ENCODE measurements at regions of chr1 and their contacts with region 1.

Region 1: DNA sequence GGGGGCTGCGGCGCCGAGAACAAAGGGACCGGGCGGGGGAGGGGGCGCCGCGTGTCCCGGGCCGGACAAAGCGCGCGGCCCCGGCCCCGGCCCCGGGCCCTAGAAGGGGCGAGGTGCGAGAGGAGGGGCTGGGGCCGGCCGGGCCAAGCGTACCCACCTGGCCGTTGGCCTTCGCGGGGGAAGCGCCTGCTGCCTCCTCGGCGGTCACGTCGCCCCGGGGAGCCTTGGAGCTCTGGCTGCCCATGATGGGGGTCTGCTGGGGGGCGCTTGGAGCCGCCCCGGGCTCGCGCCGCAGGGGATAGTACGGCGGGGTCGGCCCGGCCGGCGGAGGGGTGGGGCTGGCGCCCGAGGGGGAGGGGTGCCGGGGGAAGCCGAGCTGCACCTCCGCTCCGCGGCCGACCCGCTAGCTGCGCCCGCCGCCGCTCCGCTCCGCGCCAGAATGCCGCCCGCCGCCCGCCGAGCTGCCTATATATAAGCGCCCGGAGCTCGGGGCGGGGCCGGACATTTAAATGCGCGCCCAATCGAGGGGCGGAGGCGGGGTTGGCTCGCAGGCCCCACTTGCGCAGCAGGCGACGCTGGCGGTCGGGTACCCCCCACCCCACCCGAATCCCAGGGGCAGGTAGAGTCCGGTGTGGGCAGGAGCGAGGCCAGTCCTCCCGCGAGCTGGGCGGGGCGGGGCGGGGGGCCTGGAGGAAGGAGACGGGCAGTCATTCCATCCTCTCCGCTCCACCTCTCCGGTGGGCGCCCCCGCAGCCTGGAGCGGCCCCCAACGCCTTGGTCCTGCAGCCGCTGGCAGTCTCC is at the start of gene MARCKSL1:
- DNase-seq: peak; percentile 91
- ATAC-seq: peak; percentile 62
- H3K4me3 Mint-ChIP-seq: peak within 1 kb of the TSS; percentile 85
- H3K27ac Mint-ChIP-seq: no peak within 1 kb of the TSS
- H3K4me1 Mint-ChIP-seq: peaks cover 24% of the 10 kb centered on the region
- H3K27me3 Mint-ChIP-seq: peaks cover 7% of the 10 kb centered on the region
- total RNA-seq, gene MARCKSL1: 21.7 to 22.0 TPM

Region 2: DNA sequence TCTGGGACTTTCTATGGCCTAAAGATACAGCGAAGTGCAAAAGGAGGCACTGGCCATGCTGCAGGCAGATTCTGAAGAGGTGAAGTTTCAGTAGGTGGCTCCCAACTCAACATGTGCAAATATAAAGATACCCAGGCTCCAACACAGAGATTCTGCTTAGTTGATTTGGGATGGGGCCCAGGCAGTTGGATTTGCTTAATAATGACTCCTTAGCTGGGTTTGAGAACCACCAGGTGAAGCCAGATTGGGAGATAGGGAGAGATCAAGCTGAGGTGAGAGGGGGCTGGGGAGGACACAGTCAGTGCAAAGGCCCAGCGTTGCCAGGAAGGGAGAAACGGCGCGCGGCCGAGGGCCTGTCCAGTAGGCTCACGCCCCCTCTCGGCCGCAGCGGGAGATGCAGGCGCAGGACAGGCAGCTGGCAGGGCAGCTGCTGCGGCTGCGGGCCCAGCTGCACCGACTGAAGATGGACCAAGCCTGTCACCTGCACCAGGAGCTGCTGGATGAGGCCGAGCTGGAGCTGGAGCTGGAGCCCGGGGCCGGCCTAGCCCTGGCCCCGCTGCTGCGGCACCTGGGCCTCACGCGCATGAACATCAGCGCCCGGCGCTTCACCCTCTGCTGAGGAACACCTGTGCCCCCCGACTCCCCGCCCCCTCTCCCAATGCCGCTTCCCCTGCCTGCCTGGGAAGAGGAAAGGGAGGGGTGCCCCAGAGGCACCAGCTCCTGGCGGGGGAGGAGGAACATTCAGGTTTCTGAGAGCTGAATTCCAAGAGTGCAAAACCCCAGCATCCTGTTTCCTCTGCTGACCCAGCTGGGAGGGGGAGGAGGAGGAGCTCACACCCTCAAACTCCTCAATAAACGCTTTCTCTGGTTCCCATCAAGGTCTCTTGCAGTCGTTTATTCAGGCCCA is 87.8 kb before region 1 on chr1:
- POLR2A ChIA-PET with region 1: interaction called, 17 read pairs
- DNase-seq: peak; percentile 85
- ATAC-seq: peak; percentile 10
- H3K4me3 Mint-ChIP-seq: peak overlapping the region; percentile 99
- H3K27ac Mint-ChIP-seq: peak overlapping the region; percentile 99
- H3K4me1 Mint-ChIP-seq: peaks cover 45% of the 10 kb centered on the region
- H3K27me3 Mint-ChIP-seq: no peaks in the 10 kb centered on the region

Region 3: DNA sequence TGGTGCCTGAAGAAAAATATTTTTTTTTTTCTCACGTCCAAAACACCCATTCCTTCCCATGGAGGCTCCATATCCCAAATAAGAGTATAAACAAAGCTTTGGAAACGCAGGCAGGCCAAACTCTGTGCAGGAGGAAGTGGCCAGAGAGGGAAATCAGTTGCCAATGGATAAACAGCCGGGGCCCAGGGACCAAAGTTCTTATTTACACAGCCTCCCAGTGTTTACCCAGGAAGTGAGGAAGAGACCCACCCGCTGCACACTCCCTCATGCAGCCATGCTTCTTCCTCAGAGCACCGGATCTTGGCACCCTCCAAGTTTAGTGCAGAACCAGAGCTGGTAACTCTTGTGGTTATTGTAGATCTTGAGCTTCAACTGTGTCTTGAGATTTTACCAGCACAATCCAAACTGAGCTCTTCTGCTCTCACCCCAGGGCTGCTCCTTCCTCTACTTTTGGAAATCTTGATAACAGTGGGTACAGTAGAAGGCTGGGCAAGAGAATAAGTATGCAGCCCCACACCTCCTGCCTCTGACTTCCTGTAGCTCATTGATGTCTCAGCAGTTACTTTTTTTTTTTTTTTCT is 14.2 kb before region 1 on chr1:
- POLR2A ChIA-PET with region 1: interaction called, 12 read pairs
- DNase-seq: no peak
- ATAC-seq: peak; percentile 86
- H3K4me3 Mint-ChIP-seq: peak overlapping the region; percentile 48
- H3K27ac Mint-ChIP-seq: peak overlapping the region; percentile 75
- H3K4me1 Mint-ChIP-seq: peaks cover 29% of the 10 kb centered on the region
- H3K27me3 Mint-ChIP-seq: no peaks in the 10 kb centered on the region

Region 4: DNA sequence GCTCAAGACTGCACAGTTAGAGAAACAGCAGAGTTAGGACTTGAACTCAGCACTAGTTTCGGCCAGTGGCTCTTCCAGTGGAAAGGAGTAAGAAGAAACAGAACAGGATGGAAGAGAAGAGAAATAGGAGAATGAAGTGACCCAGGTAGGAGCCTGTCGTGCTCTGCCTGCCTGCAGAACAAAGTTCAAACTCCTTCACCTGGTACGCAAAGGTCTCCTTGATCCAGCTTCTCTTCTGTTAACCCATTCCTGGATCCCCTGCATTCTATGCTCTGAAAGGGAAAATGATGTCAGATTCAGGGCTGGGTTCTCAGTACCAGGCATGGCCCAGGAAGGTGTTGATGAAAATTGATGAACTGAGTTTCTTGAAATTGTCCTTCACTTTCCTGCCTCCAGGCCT is 22.4 kb after region 1 on chr1:
- POLR2A ChIA-PET with region 1: interaction called, 33 read pairs
- DNase-seq: no peak
- ATAC-seq: no peak
- H3K4me3 Mint-ChIP-seq: no peak overlapping the region
- H3K27ac Mint-ChIP-seq: no peak overlapping the region
- H3K4me1 Mint-ChIP-seq: peaks cover 23% of the 10 kb centered on the region
- H3K27me3 Mint-ChIP-seq: peaks cover 7% of the 10 kb centered on the region

Region 5: GRCh38 chr1:32394141-32394889 is 58.3 kb after region 1 on chr1 and contains the start of gene BSDC1:
- POLR2A ChIA-PET with region 1: interaction called, 10 read pairs
- DNase-seq: peak; percentile 98
- ATAC-seq: peak; percentile 96
- H3K4me3 Mint-ChIP-seq: peak within 1 kb of the TSS; percentile 100
- H3K27ac Mint-ChIP-seq: peak within 1 kb of the TSS; percentile 99
- H3K4me1 Mint-ChIP-seq: peaks cover 10% of the 10 kb centered on the region
- H3K27me3 Mint-ChIP-seq: peaks cover 2% of the 10 kb centered on the region
- total RNA-seq, gene BSDC1: 58.0 to 63.2 TPM